Right ventricle myocardium inferior (tissue), 1 donor: ENCODE measurements at regions of chr11 and their contacts with region 1.

Region 1: GRCh38 chr11:2186669-2187279 is 15.2 kb upstream of the TH start:
- DNase-seq: no peak
- ATAC-seq: no peak

Region 2: DNA sequence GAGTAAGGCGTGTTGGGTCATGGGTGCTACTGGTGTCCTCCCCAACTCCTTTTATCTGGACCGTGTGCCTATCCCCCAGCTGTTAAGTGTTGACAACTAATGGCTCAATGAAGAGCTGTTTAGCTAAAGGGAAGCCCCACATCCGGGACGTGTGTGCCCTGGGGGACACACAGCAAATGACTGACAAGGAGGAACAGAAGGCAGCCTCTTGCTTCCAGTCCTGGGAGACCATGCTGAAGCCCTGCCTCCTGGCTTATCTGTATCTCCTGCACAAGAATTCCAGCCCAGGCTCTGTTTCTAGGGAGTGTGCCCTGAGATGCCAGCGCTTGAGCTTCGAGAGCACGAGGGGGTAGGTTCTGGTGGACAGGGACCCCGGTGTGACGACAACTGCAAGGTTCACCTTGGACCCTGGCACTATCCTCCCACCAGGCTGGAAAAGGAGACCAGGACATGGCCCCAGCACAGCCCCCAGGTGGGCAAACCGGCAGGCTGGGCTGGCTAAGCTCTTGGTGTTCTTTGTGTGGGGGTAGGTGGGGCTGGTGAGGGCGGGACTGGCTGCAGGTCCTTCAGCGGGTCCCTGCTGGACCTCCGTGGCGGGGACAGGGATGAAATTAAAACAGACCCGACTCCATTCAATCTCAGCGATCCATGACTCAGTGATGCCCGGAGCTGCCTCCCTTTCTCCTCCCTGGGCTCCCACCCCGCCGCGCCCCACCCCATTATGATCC is 62.6 kb after region 1 on chr11:
- intact Hi-C with region 1: no loop called
- DNase-seq: no peak
- ATAC-seq: no peak

Region 3: DNA sequence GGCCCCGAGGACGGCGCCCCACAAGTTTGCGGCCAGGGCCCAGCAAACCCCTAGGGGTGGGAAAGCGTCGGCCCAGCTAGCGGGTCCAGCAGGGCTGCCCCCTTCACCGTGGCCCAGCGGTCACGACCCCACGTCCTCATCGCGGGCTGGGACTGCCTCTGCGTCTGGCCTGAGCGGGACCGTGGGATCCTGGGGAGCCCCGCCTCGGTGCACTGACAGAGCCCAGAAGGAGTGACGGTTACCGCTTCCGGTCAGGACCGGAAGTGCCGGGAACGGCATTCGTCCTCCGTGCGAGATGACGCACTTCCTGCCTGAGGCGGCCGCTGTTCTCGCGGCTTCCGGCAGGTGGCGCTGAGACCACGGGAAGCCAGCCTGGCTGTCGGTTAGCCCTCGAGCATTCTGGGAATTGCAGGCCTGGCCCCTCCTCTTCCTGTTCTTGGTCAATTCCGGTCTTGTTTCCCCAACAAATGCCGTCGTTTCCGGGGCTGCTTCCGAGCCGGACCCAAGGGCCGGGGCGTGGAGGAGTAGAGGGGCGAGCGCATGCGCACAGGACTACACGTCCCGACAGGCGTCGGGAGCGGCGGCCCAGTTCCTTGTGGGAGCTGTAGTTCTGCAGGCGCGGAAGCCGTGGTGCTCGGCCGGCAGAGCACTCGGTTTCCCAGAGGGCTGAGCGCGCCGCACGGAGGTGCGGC is 213.4 kb after region 1 on chr11 and contains the start of gene TSSC4:
- intact Hi-C with region 1: loop called (anchors 5 kb)
- DNase-seq: peak; percentile 100
- ATAC-seq: peak; percentile 94
- total RNA-seq, gene TSSC4: 31.4 TPM

Region 4: GRCh38 chr11:2420502-2421225 is 233.9 kb after region 1 on chr11:
- intact Hi-C with region 1: loop called (anchors 1 kb)
- DNase-seq: peak; percentile 89
- ATAC-seq: peak; percentile 95